A673 (cell line): ENCODE measurements at regions of chr15 and their contacts with region 1.

Region 1: DNA sequence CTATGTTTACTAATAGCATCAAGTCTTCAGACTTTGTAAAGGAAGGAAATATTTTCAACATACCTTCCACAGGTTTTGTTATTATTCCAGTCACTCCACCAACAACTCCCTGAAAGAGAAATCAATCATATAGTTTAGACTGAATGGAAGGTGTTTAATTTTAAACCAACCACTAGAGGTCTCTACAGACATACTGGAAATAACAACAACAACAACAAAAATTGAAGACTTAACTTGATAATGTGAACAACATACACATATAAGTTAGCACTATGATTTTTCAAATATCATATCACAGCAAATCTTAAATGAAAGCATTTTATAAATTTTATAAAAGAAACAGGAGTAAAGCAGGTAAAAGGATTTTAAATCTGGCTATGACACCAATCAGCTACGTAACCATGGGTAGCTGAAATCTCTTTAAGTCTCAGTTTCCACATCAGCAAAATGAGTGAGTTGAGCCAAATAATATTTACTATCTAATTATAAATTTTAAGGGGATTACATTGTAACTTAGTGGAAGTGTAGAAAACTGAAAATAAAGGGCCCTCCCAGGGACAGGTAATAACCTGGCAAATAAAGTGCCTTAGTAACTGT is 188.2 kb downstream of the VPS13C start:
- DNase-seq: peak; percentile 43
- H3K4me3 ChIP-seq: no peak overlapping the region
- H3K27ac ChIP-seq: no peak overlapping the region
- H3K4me1 ChIP-seq: no peaks in the 10 kb centered on the region
- H3K27me3 ChIP-seq: no peaks in the 10 kb centered on the region
- CTCF ChIP-seq: peak; percentile 71

Region 2: GRCh38 chr15:62066663-62067447 is 194.8 kb after region 1 on chr15 and contains the start of gene C2CD4A:
- CTCF ChIA-PET with region 1: no interaction called
- POLR2A ChIA-PET with region 1: no interaction called
- intact Hi-C with region 1: loop called (anchors 5 kb)
- DNase-seq: peak; percentile 69
- H3K4me3 ChIP-seq: peak within 1 kb of the TSS; percentile 52
- H3K27ac ChIP-seq: no peak within 1 kb of the TSS
- H3K4me1 ChIP-seq: peaks cover 13% of the 10 kb centered on the region
- H3K27me3 ChIP-seq: peaks cover 5% of the 10 kb centered on the region
- CTCF ChIP-seq: 0 out of 2 replicates have a peak, but pooled peaks have one; percentile 30
- total RNA-seq, gene C2CD4A: 0.22 and 0.34 TPM in 2 replicates

Region 3: DNA sequence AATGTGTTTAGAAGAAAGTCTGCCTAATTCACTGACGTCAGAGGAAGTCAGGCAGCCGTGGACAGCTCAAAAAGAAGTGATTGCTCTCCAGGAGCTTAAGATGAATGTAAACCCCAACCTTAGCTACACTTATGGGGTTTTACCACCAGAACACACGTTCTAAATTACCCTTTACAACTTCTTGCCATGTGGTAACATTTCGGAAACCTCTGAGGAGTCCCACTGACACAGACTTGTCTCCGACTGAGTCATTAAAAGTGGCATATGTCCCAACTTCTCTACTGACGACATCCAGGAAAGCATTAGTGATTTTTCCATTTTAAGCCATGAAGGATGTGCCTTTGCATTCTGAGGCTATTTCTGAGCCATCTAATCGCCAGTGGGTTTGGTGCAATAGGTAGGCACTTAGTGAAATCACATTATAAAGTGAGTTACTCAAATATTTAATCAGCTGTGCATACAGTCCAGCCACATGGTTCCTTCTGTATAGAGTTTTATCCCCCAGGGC is 227.1 kb after region 1 on chr15:
- CTCF ChIA-PET with region 1: no interaction called
- POLR2A ChIA-PET with region 1: no interaction called
- intact Hi-C with region 1: no loop called
- DNase-seq: peak; percentile 60
- H3K4me3 ChIP-seq: no peak overlapping the region
- H3K27ac ChIP-seq: peak overlapping the region; percentile 9
- H3K4me1 ChIP-seq: no peaks in the 10 kb centered on the region
- H3K27me3 ChIP-seq: no peaks in the 10 kb centered on the region
- CTCF ChIP-seq: no peak

Region 4: DNA sequence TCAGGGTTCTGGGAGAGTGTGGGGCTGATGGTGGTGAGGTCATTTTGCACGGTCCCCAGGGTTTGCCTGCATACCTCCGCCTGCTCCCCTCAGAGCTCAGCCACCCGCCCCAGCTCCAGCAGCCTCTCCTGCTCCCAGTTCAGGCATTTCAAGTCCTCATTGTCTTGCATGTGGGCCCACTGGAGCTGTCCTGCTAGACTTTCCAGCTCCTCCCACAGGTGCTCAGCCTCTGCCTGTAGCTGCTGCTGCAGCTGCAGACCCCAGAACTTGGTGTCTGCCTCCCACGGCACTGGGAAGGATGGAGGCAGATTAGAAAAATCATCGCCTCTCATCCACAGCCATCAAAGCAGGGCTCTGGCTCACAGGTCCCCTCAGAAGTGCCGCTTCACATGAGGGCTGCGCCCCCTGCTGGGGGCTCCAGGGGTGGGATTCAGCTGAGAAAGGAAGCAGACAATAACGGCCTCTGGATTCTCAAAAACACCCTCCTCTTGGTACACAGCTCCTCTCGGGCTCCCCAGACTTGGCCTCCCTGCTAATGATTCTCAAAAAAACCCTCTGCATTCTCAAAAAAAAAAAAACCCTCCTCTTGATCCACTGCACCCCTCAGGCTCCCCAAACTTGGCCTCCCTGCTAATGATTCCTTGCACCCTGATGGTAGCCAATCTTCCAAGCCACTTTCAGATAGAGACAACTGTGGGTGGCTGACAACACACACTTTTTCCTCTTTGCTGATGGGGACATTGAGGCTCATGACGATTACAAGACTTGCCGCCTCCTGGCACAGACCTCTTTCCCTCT is 382.3 kb after region 1 on chr15:
- CTCF ChIA-PET with region 1: no interaction called
- POLR2A ChIA-PET with region 1: no interaction called
- intact Hi-C with region 1: loop called (anchors 5 kb)
- DNase-seq: peak; percentile 84
- H3K4me3 ChIP-seq: no peak overlapping the region
- H3K27ac ChIP-seq: no peak overlapping the region
- H3K4me1 ChIP-seq: no peaks in the 10 kb centered on the region
- H3K27me3 ChIP-seq: no peaks in the 10 kb centered on the region
- CTCF ChIP-seq: peak; percentile 89

Region 5: DNA sequence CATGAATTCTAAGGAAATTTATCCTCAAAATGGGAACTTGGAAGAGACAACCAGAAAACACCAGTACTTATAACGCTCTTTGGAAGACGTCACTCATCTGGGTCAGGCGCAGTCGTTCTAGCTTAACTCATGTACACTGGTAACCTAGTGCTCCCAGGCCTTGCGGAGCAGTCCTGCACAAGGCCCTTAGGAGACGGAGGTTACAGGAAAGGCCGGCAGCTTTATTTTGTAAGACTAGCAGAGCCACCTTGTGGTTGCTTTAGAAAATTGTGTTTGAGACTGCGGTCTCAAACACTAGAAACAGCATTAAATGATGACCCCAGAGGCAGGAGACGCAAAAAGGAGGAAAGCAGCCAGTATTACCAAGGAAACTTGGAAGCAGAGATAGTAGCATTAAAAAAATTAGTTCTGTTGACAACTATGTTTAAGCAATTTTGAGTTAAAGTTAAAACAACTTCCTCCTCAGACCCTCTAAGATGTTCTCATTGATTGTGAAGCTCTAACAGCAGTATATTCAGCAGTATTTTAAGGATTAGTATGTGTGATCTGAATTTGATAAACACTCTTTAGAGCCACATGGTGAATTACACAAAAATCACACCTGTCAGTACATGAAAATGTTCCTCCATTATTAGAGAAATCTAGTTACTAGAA is 435.0 kb after region 1 on chr15:
- CTCF ChIA-PET with region 1: no interaction called
- POLR2A ChIA-PET with region 1: no interaction called
- intact Hi-C with region 1: loop called (anchors 2 kb)
- DNase-seq: peak; percentile 72
- H3K4me3 ChIP-seq: no peak overlapping the region
- H3K27ac ChIP-seq: no peak overlapping the region
- H3K4me1 ChIP-seq: no peaks in the 10 kb centered on the region
- H3K27me3 ChIP-seq: no peaks in the 10 kb centered on the region
- CTCF ChIP-seq: peak; percentile 74